Right ventricle myocardium inferior (tissue), 1 donor: ENCODE measurements at regions of chr12 and their contacts with region 1.

Region 1: GRCh38 chr12:124506145-124506831 is 61.1 kb downstream of the NCOR2 start:
- DNase-seq: peak; percentile 94
- ATAC-seq: peak; percentile 41

Region 2: DNA sequence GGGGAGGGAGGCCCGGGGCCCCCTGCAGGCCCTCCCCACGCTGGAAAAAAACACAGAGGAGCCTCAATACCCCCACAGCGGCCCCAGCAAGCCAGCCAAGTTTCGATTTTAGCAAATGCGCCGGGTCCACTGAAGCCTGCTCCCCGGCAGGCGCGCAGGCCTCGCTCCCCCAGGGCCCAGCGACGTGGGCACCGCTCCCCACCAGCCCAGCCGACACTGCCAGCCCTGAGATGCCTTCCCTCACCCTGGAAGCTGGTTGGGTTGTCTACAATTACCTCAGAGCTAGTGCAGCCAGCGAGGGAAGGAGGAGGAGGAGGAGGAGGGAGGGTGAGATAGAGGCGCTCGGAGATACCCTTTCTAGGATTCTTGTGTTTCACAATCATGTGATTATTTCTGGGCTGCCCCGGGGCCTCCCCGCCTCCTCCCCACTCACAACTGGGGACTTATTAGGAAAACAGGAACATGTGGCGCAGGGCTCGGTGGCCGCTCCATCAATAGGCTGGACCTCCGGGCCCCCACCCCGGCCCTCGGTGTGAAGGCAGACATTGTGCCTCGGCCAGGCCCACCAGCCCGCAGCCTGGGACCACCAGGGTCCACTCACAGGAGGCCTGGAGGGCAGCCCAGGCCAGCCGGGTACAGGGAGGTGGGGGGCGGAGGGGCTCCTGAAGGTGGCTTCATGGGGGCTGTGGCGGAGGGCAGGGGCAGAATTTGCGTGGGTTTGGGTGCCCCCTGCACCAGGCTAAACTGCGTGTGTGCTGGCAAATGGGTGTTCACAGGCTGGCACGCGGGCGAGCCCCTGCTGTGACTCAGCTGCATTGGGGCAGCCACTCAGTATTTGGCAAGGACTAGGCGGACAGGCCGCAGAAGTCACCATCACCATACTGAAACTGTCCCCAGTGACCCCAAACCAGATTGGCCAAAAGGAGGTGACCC is 48.7 kb before region 1 on chr12:
- intact Hi-C with region 1: loop called (anchors 5 kb)
- DNase-seq: peak; percentile 90
- ATAC-seq: peak; percentile 86

Region 3: GRCh38 chr12:124680863-124681778 is 174.8 kb after region 1 on chr12:
- intact Hi-C with region 1: loop called (anchors 5 kb)
- DNase-seq: peak; percentile 77
- ATAC-seq: peak; percentile 79

Region 4: GRCh38 chr12:125773033-125773640 is 1266.8 kb after region 1 on chr12:
- intact Hi-C with region 1: no loop called
- DNase-seq: peak; percentile 63
- ATAC-seq: no peak